Posterior vena cava (tissue), 2 donors: ENCODE measurements at regions of chr7 and their contacts with region 1.

Region 1: GRCh38 chr7:3415861-3416312 is 114.8 kb downstream of the SDK1 start:
- DNase-seq: no peak

Region 2: GRCh38 chr7:2009541-2010001 is 1406.3 kb before region 1 on chr7:
- intact Hi-C with region 1: no loop called
- DNase-seq: peak; percentile 64

Region 3: GRCh38 chr7:4080006-4080405 is 664.1 kb after region 1 on chr7:
- intact Hi-C with region 1: no loop called
- DNase-seq: no peak

Region 4: DNA sequence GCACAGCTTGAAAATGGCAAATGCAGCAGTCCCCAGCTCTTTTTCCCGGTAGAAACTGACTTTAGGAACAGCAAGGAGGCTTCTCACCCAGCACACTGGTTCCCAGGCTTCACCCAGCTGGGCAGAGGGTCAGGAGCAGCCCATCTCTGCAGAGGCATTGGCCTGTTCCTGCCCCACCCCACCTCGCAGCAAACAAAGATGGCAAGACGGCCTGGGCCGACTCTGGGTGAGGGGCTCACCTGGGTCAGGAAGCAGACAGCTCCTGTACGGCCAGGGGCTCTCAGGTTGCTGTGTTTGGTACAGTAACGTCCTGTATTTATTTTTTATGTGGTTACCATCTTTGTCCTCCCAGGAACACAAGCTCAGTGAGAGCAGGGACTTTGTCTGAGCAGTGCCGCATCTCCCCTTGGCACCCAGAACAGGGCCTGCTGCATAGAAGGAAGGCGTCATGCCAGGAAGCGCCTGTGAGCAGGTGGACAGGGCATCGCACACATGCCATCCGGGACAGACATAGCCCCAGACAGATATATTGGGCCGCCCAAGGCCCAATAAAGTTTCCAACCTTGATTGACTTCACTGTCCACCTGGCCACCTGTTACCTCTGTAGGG is 681.2 kb after region 1 on chr7:
- intact Hi-C with region 1: loop called in 1 of 2 experiments (anchors 5 kb)
- DNase-seq: no peak